A549 (cell line): ENCODE measurements at regions of chr5 and their contacts with region 1.

Region 1: DNA sequence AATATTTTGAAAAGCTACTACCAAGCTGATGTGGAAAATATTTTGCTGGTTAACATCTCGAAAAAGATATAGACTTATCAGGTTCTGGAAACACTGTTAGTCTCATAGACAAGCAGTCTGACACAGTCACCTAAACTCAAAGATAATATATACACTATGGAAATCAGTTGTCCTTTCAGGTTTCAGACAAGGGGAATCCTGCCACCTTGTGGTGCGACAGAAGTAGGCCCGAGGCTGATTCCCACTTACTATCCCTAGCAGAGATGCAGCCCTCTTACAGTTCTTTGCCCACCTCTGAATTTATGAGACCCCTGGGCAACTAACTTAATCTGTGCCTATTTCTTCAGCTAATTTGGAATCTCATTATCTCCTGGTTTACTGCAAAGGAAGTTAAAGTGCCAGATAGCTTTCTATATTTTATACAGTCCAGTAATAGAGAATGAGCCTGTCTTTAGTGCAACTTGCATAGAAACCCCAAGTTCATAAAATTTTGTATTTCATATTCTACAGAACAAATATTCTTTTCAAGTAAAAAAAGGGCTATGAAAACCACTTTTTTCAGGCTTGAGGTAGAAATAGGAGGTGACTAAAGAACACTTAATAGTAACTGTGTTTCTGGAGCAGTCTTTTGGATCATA is 16.9 kb downstream of the RAD1 start:
- DNase-seq: peak; percentile 56 to 69
- ATAC-seq: peak; percentile 95 to 96
- H3K4me3 ChIP-seq: no peak overlapping the region
- H3K27ac ChIP-seq: no peak overlapping the region
- H3K4me1 ChIP-seq: no peaks in the 10 kb centered on the region
- CTCF ChIP-seq: peak; percentile 89
- EP300 ChIP-seq: no peak
- POLR2A ChIP-seq: no peak
- RAD21 ChIP-seq: peak; percentile 95 to 96

Region 2: GRCh38 chr5:34511915-34512314 is 386.5 kb before region 1 on chr5:
- CTCF ChIA-PET with region 1: interaction called, 15 read pairs
- POLR2A ChIA-PET with region 1: no interaction called
- DNase-seq: no peak
- ATAC-seq: peak; percentile 47 to 80; a peak in 3 of 6 replicates
- H3K4me3 ChIP-seq: no peak overlapping the region
- H3K27ac ChIP-seq: no peak overlapping the region
- H3K4me1 ChIP-seq: peaks cover 27% of the 10 kb centered on the region
- CTCF ChIP-seq: no peak
- EP300 ChIP-seq: no peak
- POLR2A ChIP-seq: no peak
- RAD21 ChIP-seq: no peak

Region 3: GRCh38 chr5:34598177-34598794 is 300.1 kb before region 1 on chr5:
- CTCF ChIA-PET with region 1: interaction called, 10 read pairs
- POLR2A ChIA-PET with region 1: no interaction called
- DNase-seq: peak; percentile 78 to 85
- ATAC-seq: peak; percentile 84 to 87
- H3K4me3 ChIP-seq: no peak overlapping the region
- H3K27ac ChIP-seq: peak overlapping the region; percentile 79 to 87
- H3K4me1 ChIP-seq: peaks cover 38% of the 10 kb centered on the region
- CTCF ChIP-seq: no peak
- EP300 ChIP-seq: peak; percentile 64 to 82; a peak in 3 of 5 replicates
- POLR2A ChIP-seq: no peak
- RAD21 ChIP-seq: peak in 1 of 2 experiments; percentile 16; a peak in 2 of 5 replicates

Region 4: GRCh38 chr5:34826347-34826746 is 72.0 kb before region 1 on chr5:
- CTCF ChIA-PET with region 1: interaction called, 16 read pairs
- POLR2A ChIA-PET with region 1: no interaction called
- DNase-seq: no peak
- ATAC-seq: no peak
- H3K4me3 ChIP-seq: no peak overlapping the region
- H3K27ac ChIP-seq: no peak overlapping the region
- H3K4me1 ChIP-seq: no peaks in the 10 kb centered on the region
- CTCF ChIP-seq: no peak
- EP300 ChIP-seq: no peak
- POLR2A ChIP-seq: no peak
- RAD21 ChIP-seq: no peak

Region 5: GRCh38 chr5:34869256-34869655 is 29.1 kb before region 1 on chr5:
- CTCF ChIA-PET with region 1: interaction called, 11 read pairs
- POLR2A ChIA-PET with region 1: no interaction called
- DNase-seq: no peak
- ATAC-seq: no peak
- H3K4me3 ChIP-seq: no peak overlapping the region
- H3K27ac ChIP-seq: no peak overlapping the region
- H3K4me1 ChIP-seq: peaks cover 7% of the 10 kb centered on the region
- CTCF ChIP-seq: no peak
- EP300 ChIP-seq: no peak
- POLR2A ChIP-seq: no peak
- RAD21 ChIP-seq: no peak

Region 6: GRCh38 chr5:34915139-34915855 is 16.9 kb after region 1 on chr5 and contains the starts of genes BRIX1 and RAD1:
- CTCF ChIA-PET with region 1: interaction called, 15 read pairs
- POLR2A ChIA-PET with region 1: interaction called, 3 read pairs
- DNase-seq: peak; percentile 86 to 98
- ATAC-seq: peak; percentile 99 to 100
- H3K4me3 ChIP-seq: peak within 1 kb of the TSS; percentile 96
- H3K27ac ChIP-seq: peak within 1 kb of the TSS; percentile 96 to 98
- H3K4me1 ChIP-seq: peaks cover 38% of the 10 kb centered on the region
- CTCF ChIP-seq: no peak
- EP300 ChIP-seq: no peak
- POLR2A ChIP-seq: peak; percentile 72
- RAD21 ChIP-seq: 0 out of 5 replicates have a peak, but pooled peaks of 1 of the 2 experiments have one; percentile 12
- polyA plus RNA-seq, gene BRIX1: 56.2 and 88.5 TPM in 2 replicates
- polyA plus RNA-seq, gene RAD1: 37.2 and 41.4 TPM in 2 replicates

Region 7: GRCh38 chr5:35285011-35285410 is 386.6 kb after region 1 on chr5:
- CTCF ChIA-PET with region 1: no interaction called
- POLR2A ChIA-PET with region 1: no interaction called
- DNase-seq: no peak
- ATAC-seq: no peak
- H3K4me3 ChIP-seq: no peak overlapping the region
- H3K27ac ChIP-seq: no peak overlapping the region
- H3K4me1 ChIP-seq: no peaks in the 10 kb centered on the region
- CTCF ChIP-seq: no peak
- EP300 ChIP-seq: no peak
- POLR2A ChIP-seq: no peak
- RAD21 ChIP-seq: no peak